ENCODE measurements at regions of chr1 and their contacts with region 1.

Region 1: GRCh38 chr1:64082459-64082858 is 121.0 kb upstream of the UBE2U start:
- DNase-seq: no peak
- ATAC-seq: no peak
- H3K4me3 Mint-ChIP-seq: no peak overlapping the region
- H3K27ac Mint-ChIP-seq: no peak overlapping the region
- H3K4me1 Mint-ChIP-seq: no peaks in the 10 kb centered on the region
- H3K27me3 Mint-ChIP-seq: no peaks in the 10 kb centered on the region
- CTCF ChIP-seq: no peak

Region 2: GRCh38 chr1:64060611-64061302 is 21.7 kb before region 1 on chr1:
- CTCF ChIA-PET with region 1: no interaction called
- POLR2A ChIA-PET with region 1: no interaction called
- intact Hi-C with region 1: loop called (anchors 1 kb)
- DNase-seq: no peak
- ATAC-seq: no peak
- H3K4me3 Mint-ChIP-seq: no peak overlapping the region
- H3K27ac Mint-ChIP-seq: no peak overlapping the region
- H3K4me1 Mint-ChIP-seq: no peaks in the 10 kb centered on the region
- H3K27me3 Mint-ChIP-seq: peaks cover 7% of the 10 kb centered on the region
- CTCF ChIP-seq: no peak

Measured in activated B cell treated with CpG ODN at 0.5 μM for 24 hours (primary cell).